OCI-LY7 (cell line): ENCODE measurements at regions of chr7 and their contacts with region 1.

Region 1: DNA sequence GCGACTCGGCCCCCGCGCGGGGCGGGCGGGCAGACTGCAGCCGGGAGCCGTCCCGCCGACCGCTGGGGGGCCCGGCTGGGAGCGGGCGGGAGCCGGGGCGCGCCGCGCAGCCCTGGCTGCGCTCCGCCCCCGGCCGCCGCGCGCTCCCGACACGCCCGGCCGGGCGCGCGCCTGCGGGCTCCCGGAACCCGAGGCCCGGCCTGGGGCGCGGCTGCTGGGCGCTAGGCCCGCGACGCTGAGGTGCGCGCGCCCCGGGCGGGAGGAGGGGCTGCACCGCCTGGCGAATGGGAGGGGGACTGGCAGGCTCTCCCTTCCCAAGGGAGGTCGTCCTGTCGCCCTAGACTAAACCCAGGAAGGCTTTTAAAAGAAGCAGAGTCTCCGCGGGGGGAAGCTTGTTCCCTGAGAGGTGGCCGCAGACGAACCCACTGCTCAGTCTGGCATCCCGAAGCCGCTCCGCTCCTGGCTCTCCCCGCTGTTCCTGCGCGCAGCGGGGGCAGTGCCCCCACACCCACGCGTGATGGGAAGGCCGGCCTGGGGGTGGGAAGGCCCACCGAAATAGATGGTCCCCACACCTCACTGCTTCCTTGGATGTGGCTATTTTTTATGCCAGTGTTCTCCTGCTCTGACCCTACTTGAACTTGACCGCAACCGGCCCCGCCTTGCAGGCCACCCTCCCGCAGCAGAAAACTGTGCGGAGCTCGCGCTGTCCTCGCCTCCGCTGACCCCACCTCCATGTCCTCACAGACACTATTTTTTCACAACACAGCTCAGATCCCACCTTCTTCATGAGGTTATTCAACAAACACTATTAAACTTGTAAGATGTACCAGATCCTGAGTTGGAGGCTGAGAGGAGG is at the start of gene VOPP1:
- DNase-seq: peak; percentile 87
- H3K4me3 ChIP-seq: peak within 1 kb of the TSS; percentile 95
- H3K27ac ChIP-seq: peak within 1 kb of the TSS; percentile 60
- H3K4me1 ChIP-seq: peaks cover 48% of the 10 kb centered on the region
- CTCF ChIP-seq: no peak
- total RNA-seq, gene VOPP1: 66.9 and 68.8 TPM in 2 replicates

Region 2: GRCh38 chr7:55245271-55245723 is 327.3 kb before region 1 on chr7:
- CTCF ChIA-PET with region 1: no interaction called
- POLR2A ChIA-PET with region 1: no interaction called
- intact Hi-C with region 1: no loop called
- DNase-seq: no peak
- H3K4me3 ChIP-seq: no peak overlapping the region
- H3K27ac ChIP-seq: no peak overlapping the region
- H3K4me1 ChIP-seq: no peaks in the 10 kb centered on the region
- CTCF ChIP-seq: no peak

Region 3: GRCh38 chr7:55552320-55553023 is 20.1 kb before region 1 on chr7:
- CTCF ChIA-PET with region 1: interaction called, 3 read pairs
- POLR2A ChIA-PET with region 1: interaction called, 4 read pairs
- intact Hi-C with region 1: loop called (anchors 1 kb)
- DNase-seq: no peak
- H3K4me3 ChIP-seq: no peak overlapping the region
- H3K27ac ChIP-seq: no peak overlapping the region
- H3K4me1 ChIP-seq: peaks cover 80% of the 10 kb centered on the region
- CTCF ChIP-seq: no peak

Region 4: DNA sequence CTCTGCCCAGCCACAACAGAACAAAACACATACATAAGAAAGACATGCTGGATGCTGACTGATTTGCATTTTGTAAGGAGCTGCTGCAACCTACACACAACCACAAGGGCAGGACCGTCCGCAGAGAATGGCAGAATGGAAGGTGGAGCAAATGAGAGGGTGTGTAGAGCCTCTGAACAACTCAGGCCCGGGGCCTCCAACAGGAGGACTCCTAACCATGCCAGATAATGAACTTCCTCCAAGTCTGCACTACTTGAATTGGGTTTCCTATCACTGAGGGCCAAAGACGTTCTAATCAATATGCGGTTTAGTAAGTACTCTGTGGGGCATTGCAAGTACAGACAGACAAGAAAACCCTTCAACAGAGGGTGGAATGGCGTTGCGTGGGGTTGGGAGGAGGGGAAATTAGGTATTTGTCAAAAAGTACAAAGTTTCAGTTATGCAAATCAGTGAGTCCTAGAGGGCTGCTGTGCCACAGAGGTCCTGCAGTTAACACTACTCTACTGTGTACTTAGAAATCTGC is 14.9 kb before region 1 on chr7:
- CTCF ChIA-PET with region 1: interaction called, 4 read pairs
- POLR2A ChIA-PET with region 1: interaction called, 8 read pairs
- intact Hi-C with region 1: loop called (anchors 2 kb)
- DNase-seq: peak; percentile 68
- H3K4me3 ChIP-seq: peak overlapping the region; percentile 48
- H3K27ac ChIP-seq: peak overlapping the region; percentile 73
- H3K4me1 ChIP-seq: peaks cover 83% of the 10 kb centered on the region
- CTCF ChIP-seq: no peak

Region 5: DNA sequence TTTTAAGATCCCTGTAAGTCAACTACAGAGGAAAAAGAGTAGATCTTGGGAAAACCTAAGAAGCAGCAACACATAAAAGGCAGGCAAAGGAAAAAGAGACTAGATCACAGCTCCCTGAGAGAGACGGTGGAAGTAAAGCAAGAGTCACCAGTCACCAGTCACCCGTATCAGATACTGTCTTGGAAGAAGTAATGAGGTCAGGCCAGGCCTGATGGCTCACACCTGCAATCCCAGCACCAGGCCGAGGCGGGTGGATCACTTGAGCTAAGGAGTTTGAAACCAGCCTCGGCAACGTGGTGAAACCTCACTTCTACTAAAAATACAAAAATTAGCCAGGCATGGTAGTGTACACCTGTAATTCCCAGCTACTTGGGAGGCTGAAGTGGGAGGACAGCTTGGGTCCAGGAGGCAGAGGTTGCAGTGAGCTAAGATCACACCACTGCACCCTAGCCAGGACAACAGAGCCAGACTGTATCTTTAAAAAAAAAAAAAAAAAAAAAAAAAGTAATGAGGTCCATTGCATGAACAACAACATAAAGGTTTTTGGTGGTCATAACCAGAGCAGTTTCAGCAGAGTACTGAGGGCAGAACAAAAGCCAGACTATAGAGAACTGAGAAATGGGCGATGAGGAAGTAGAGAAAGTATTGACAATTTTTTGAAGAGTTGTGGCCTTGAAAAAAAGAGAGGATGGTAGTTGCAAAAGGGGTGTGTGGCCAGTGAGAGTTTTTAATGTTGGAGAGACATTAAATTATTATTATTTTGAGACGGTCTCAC is 331.6 kb after region 1 on chr7:
- CTCF ChIA-PET with region 1: no interaction called
- POLR2A ChIA-PET with region 1: no interaction called
- intact Hi-C with region 1: loop called (anchors 10 kb)
- DNase-seq: peak; percentile 59
- H3K4me3 ChIP-seq: no peak overlapping the region
- H3K27ac ChIP-seq: peak overlapping the region; percentile 76
- H3K4me1 ChIP-seq: peaks cover 46% of the 10 kb centered on the region
- CTCF ChIP-seq: no peak